Activated naive CD4-positive, alpha-beta T cell treated with anti-CD3 and anti-CD28 coated beads for 36 hours (primary cell): ENCODE measurements at regions of chr5 and their contacts with region 1.

Region 1: DNA sequence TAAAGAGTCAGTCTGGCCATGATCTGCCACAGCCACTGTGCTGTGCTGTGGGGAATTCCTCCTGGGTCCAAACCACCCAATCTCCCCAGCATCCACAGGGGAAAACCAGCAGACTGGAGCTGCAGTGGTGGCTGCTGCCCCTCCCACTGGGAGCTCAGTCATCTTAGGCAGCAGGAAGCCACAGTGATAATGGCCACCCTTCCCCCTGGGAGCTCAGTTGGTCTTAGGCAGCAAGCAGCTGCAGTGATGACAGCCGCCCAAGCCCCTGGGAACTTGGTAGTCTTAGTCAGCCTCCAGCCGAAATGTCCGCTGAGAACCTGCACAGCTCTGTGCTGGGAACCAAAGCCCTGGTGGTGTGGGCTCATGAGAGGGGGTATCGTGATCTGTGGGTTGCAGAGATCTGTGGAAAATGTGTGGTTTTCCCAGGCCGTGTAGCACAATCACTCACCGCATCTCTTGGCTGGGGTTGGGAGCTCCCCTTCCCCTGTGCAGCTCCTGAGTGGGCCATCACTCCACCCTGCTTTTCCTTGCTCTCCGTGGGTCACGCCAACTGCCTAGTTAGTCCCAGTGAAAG is 38.4 kb upstream of the SMIM15 start:
- DNase-seq: no peak
- H3K4me3 Mint-ChIP-seq: no peak overlapping the region
- H3K27ac Mint-ChIP-seq: no peak overlapping the region
- H3K4me1 Mint-ChIP-seq: peaks cover 7% of the 10 kb centered on the region
- H3K27me3 Mint-ChIP-seq: peaks cover 37% of the 10 kb centered on the region

Region 2: GRCh38 chr5:61162010-61162831 is 38.4 kb before region 1 on chr5 and contains the start of gene SMIM15:
- CTCF ChIA-PET with region 1: no interaction called
- intact Hi-C with region 1: loop called (anchors 2 kb)
- DNase-seq: peak; percentile 90
- H3K4me3 Mint-ChIP-seq: peak within 1 kb of the TSS; percentile 97
- H3K27ac Mint-ChIP-seq: peak within 1 kb of the TSS; percentile 95
- H3K4me1 Mint-ChIP-seq: peaks cover 38% of the 10 kb centered on the region
- H3K27me3 Mint-ChIP-seq: no peaks in the 10 kb centered on the region
- total RNA-seq, gene SMIM15: 45.8 to 48.1 TPM

Region 3: GRCh38 chr5:61534481-61535267 is 334.0 kb after region 1 on chr5:
- CTCF ChIA-PET with region 1: no interaction called
- intact Hi-C with region 1: loop called (anchors 2 kb)
- DNase-seq: peak; percentile 18
- H3K4me3 Mint-ChIP-seq: no peak overlapping the region
- H3K27ac Mint-ChIP-seq: no peak overlapping the region
- H3K4me1 Mint-ChIP-seq: peaks cover 17% of the 10 kb centered on the region
- H3K27me3 Mint-ChIP-seq: no peaks in the 10 kb centered on the region